ENCODE measurements at regions of chr12 and their contacts with region 1.

Region 1: DNA sequence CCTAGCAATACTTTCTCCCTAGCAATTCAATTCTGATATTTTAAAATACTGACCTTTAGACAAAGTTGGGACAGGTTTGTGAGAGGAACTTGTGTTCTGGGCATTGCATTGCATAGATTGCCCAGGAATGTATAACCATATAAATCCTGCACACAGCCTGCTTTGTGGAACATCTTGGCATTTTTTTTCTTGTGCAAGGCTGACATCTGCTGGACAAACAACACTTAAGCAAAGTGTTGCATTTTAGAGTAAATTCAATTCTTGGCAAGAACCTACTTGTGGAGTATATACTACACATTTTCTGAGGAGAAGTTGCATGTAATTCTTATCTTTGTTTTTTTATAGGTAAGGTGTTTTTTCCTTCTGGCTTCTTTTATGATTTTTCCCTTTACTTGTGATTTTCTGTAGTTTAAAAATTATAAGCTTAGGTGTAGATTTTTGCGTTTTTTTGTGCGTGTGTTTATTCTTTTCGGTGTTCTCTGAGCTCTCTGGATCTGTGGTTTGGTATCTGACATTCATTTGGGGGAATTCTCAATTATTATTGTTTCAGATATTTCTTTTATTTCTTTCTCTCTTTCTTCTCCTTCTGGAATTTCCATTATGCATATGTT is 26.4 kb downstream of the TESPA1 start:
- DNase-seq: peak; percentile 48 to 60
- H3K4me3 ChIP-seq: no peak overlapping the region
- H3K4me3 Mint-ChIP-seq: no peak overlapping the region
- H3K27ac Mint-ChIP-seq: no peak overlapping the region
- H3K4me1 ChIP-seq: no peaks in the 10 kb centered on the region
- H3K4me1 Mint-ChIP-seq: no peaks in the 10 kb centered on the region
- H3K27me3 ChIP-seq: no peaks in the 10 kb centered on the region
- H3K27me3 Mint-ChIP-seq: peaks cover 15% of the 10 kb centered on the region
- CTCF ChIP-seq: peak; percentile 58 to 68

Region 2: DNA sequence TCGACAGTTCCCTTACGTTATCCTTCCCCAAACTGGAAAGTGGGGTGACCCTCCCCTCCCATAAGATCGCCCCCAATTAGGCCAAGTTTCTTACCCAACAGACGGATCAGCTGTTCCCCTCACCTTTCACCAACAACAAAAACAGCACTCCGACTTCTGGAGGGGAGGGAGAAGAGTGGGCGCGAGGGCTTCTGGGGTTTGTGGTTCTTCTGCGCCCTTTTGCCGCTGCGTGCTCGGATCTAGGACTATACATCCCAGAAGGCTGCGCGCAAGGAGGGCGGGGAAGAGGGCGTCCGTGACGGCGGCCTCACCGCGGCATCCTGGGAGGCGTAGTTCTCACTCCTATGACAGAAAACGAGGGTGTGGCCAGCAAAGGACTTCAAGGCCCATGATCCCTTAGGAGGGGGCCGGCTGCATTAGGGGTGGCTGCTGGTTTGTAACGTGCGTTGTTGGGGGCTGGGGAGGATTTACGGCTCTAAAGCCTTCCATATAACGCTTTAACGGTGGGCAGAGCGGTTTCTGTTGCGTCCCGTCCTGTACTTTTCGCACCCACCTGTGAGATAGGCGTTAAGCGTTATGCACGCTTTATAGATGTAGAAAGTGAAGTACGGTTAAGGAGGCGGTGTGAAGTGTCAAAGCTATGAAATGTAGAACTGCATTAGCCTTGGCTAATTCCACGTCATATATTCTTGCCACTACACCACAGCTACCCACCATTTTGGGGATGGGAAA is 1230.7 kb before region 1 on chr12 and contains the start of gene CALCOCO1:
- CTCF ChIA-PET with region 1: no interaction called
- POLR2A ChIA-PET with region 1: no interaction called
- intact Hi-C with region 1: no loop called
- DNase-seq: peak; percentile 95 to 96
- H3K4me3 ChIP-seq: peak within 1 kb of the TSS; percentile 57
- H3K4me3 Mint-ChIP-seq: peak within 1 kb of the TSS; percentile 94
- H3K27ac Mint-ChIP-seq: peak within 1 kb of the TSS; percentile 99
- H3K4me1 ChIP-seq: peaks cover 20% of the 10 kb centered on the region
- H3K4me1 Mint-ChIP-seq: peaks cover 11% of the 10 kb centered on the region
- H3K27me3 ChIP-seq: no peaks in the 10 kb centered on the region
- H3K27me3 Mint-ChIP-seq: no peaks in the 10 kb centered on the region
- CTCF ChIP-seq: no peak
- total RNA-seq, gene CALCOCO1: 19.3 and 21.4 TPM in 2 replicates

Region 3: DNA sequence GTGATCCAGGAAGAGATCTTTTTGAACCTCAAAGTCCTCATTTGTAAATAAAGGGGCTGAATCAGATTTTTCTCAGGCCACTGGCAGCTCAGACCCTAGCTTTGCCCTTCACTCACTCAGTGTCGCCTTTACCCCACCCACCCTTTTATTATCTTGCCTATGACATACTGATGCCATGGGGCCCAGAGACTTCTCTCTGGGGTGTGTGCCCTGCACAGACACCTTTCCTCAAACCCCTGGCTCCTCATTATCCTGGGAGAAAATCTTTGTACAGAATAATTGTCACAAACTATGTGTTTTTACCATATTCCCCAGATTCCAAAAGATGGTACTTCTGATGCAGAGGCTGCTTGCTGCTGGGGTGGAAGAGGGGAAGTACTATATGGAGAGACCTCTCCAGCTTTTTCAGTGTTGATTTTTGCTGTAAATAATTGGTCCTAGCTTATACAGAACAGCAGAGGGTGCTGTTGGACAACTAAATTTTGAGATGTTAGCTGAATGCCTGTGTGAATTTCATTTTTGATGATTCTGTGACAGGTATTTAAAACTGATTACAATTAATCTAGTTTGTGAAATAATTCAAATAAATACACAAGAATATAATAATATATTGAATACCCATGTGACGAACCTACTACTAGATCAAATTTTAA is 256.1 kb before region 1 on chr12:
- CTCF ChIA-PET with region 1: no interaction called
- POLR2A ChIA-PET with region 1: no interaction called
- intact Hi-C with region 1: loop called (anchors 1 kb)
- DNase-seq: peak in 1 of 2 experiments; percentile 22
- H3K4me3 ChIP-seq: no peak overlapping the region
- H3K4me3 Mint-ChIP-seq: no peak overlapping the region
- H3K27ac Mint-ChIP-seq: no peak overlapping the region
- H3K4me1 ChIP-seq: peaks cover 8% of the 10 kb centered on the region; the same call in 1 of the 2 replicates
- H3K4me1 Mint-ChIP-seq: peaks cover 8% of the 10 kb centered on the region
- H3K27me3 ChIP-seq: no peaks in the 10 kb centered on the region
- H3K27me3 Mint-ChIP-seq: peaks cover 5% of the 10 kb centered on the region
- CTCF ChIP-seq: peak in 1 of 2 experiments; percentile 59

Region 4: DNA sequence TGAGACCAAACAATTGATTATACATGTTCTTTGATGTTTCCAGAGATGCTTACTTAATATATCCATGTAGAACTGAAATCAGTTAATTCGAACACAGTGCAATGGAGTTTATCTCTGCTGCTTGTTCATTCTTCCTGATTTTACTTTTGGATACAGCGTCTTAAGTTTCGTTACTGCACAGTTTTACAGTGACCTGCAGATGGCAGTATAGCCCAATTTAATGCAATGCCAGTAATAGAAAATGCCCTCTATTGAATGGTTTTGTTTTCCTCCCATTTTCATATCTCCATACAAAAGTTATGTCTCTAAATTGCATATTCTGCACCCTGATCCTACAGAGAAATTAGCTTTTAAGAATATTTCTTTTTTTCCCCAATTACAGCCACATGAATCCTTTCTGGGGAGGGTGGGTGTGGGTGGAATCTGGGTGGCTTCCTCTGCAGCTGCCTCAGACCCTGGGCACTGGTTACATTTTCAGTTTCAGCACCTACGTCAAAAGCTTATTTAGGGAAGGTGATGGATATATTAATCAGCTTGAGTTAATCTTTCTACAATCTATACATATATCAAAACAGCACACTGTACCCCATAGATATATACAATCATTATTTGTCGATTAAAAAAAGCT is 208.8 kb before region 1 on chr12:
- CTCF ChIA-PET with region 1: no interaction called
- POLR2A ChIA-PET with region 1: no interaction called
- intact Hi-C with region 1: loop called (anchors 1 kb)
- DNase-seq: peak in 1 of 2 experiments; percentile 44
- H3K4me3 ChIP-seq: no peak overlapping the region
- H3K4me3 Mint-ChIP-seq: no peak overlapping the region
- H3K27ac Mint-ChIP-seq: no peak overlapping the region
- H3K4me1 ChIP-seq: no peaks in the 10 kb centered on the region
- H3K4me1 Mint-ChIP-seq: no peaks in the 10 kb centered on the region
- H3K27me3 ChIP-seq: no peaks in the 10 kb centered on the region
- H3K27me3 Mint-ChIP-seq: peaks cover 6% of the 10 kb centered on the region
- CTCF ChIP-seq: peak; percentile 36 to 58

Region 5: GRCh38 chr12:54759751-54760150 is 198.4 kb before region 1 on chr12:
- CTCF ChIA-PET with region 1: interaction called, 7 read pairs
- POLR2A ChIA-PET with region 1: no interaction called
- intact Hi-C with region 1: loop called (anchors 1 kb)
- DNase-seq: peak; percentile 46 to 49
- H3K4me3 ChIP-seq: no peak overlapping the region
- H3K4me3 Mint-ChIP-seq: no peak overlapping the region
- H3K27ac Mint-ChIP-seq: no peak overlapping the region
- H3K4me1 ChIP-seq: no peaks in the 10 kb centered on the region
- H3K4me1 Mint-ChIP-seq: no peaks in the 10 kb centered on the region
- H3K27me3 ChIP-seq: no peaks in the 10 kb centered on the region
- H3K27me3 Mint-ChIP-seq: peaks cover 5% of the 10 kb centered on the region
- CTCF ChIP-seq: peak; percentile 23 to 64

Region 6: GRCh38 chr12:54853995-54854566 is 104.1 kb before region 1 on chr12 and contains the start of gene MUCL1:
- CTCF ChIA-PET with region 1: no interaction called
- POLR2A ChIA-PET with region 1: no interaction called
- intact Hi-C with region 1: loop called (anchors 1 kb)
- DNase-seq: peak; percentile 67 to 73
- H3K4me3 ChIP-seq: no peak within 1 kb of the TSS
- H3K4me3 Mint-ChIP-seq: no peak within 1 kb of the TSS
- H3K27ac Mint-ChIP-seq: no peak within 1 kb of the TSS
- H3K4me1 ChIP-seq: no peaks in the 10 kb centered on the region
- H3K4me1 Mint-ChIP-seq: no peaks in the 10 kb centered on the region
- H3K27me3 ChIP-seq: no peaks in the 10 kb centered on the region
- H3K27me3 Mint-ChIP-seq: peaks cover 16% of the 10 kb centered on the region
- CTCF ChIP-seq: peak; percentile 74 to 78
- total RNA-seq, gene MUCL1: not detected in 2 replicates